Endothelial cell of umbilical vein (primary cell): ENCODE measurements at regions of chr17 and their contacts with region 1.

Region 1: DNA sequence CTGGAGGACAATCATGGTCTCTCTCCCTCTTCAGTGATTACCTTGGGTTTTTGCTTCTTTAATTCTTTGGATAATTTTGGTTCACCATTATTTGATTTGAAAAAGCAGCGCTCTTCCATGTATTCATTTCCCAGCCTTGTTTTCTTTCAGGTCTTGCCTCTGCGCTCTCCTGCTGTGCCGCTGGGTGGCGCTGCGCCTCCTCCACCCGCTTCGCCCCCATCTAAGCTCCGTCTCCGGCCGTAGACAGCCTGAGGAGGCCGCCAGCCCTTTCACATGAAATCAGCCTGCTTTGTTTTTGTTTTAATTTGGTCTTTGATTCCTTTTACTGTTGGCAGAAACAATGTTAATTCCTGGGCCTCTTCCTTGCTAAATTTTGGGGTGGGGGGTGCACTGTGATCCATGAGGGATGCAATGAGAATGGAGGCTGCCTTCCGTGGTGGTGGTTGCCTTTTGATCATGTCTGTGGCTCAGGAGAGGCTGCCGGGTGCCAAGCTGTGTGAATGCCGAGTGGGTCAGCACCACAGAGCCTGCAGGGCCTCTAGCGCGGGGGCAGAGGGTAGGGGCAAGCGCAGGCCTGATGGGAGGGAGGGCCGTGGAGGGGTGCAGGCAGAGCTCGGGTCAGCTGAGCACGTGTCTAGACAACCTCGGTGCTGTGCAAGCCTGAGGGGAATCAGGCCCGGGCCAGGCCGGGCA is 64.1 kb downstream of the PLD6 start:
- DNase-seq: peak; percentile 50
- H3K4me3 ChIP-seq: no peak overlapping the region
- H3K27ac ChIP-seq: no peak overlapping the region
- H3K4me1 ChIP-seq: peaks cover 12% of the 10 kb centered on the region
- H3K27me3 ChIP-seq: no peaks in the 10 kb centered on the region
- CTCF ChIP-seq: peak; percentile 88 to 94
- POLR2A ChIP-seq: no peak

Region 2: DNA sequence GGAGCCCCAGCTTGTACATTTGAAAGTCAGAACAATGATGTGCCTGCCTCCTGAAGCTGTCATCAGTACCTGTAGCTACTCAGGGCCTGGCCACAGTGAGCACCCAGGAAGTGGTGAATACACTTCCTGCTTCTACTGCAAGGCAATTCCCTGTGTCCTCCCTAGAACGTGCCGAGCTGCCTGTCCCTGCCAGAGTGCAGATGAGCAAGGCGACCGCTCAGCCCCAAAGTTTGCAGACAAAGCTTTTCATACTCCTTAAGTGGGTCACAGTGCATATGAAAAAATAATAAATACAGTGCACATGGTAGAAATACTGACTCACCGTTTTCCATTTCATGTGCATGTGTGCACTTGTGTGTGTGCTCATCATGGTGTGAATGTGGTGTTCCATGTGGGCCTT is 22.5 kb before region 1 on chr17:
- CTCF ChIA-PET with region 1: interaction called, 14 read pairs
- POLR2A ChIA-PET with region 1: no interaction called
- dilution Hi-C with region 1: no loop called
- intact Hi-C with region 1: no loop called
- DNase-seq: peak; percentile 29
- H3K4me3 ChIP-seq: no peak overlapping the region
- H3K27ac ChIP-seq: no peak overlapping the region
- H3K4me1 ChIP-seq: no peaks in the 10 kb centered on the region
- H3K27me3 ChIP-seq: no peaks in the 10 kb centered on the region
- CTCF ChIP-seq: no peak
- POLR2A ChIP-seq: no peak

Region 3: GRCh38 chr17:17171991-17172939 is 30.3 kb after region 1 on chr17:
- CTCF ChIA-PET with region 1: interaction called, 13 read pairs
- POLR2A ChIA-PET with region 1: no interaction called
- dilution Hi-C with region 1: no loop called
- intact Hi-C with region 1: no loop called
- DNase-seq: peak; percentile 25
- H3K4me3 ChIP-seq: no peak overlapping the region
- H3K27ac ChIP-seq: no peak overlapping the region
- H3K4me1 ChIP-seq: peaks cover 12% of the 10 kb centered on the region
- H3K27me3 ChIP-seq: no peaks in the 10 kb centered on the region
- CTCF ChIP-seq: peak in 1 of 2 donors; percentile 6
- POLR2A ChIP-seq: no peak

Region 4: GRCh38 chr17:17206124-17206912 is 64.3 kb after region 1 on chr17 and contains the start of gene PLD6:
- CTCF ChIA-PET with region 1: interaction called, 8 read pairs
- POLR2A ChIA-PET with region 1: no interaction called
- dilution Hi-C with region 1: no loop called
- intact Hi-C with region 1: loop called (anchors 1 kb)
- DNase-seq: peak; percentile 68
- H3K4me3 ChIP-seq: peak within 1 kb of the TSS; percentile 36 to 53 (median 48)
- H3K27ac ChIP-seq: no peak within 1 kb of the TSS
- H3K4me1 ChIP-seq: peaks cover 13% of the 10 kb centered on the region
- H3K27me3 ChIP-seq: no peaks in the 10 kb centered on the region
- CTCF ChIP-seq: no peak
- POLR2A ChIP-seq: peak; percentile 45
- total RNA-seq, gene PLD6: 2.7 and 4.4 TPM in 2 replicates

Region 5: GRCh38 chr17:17313350-17313991 is 171.5 kb after region 1 on chr17:
- CTCF ChIA-PET with region 1: no interaction called
- POLR2A ChIA-PET with region 1: no interaction called
- dilution Hi-C with region 1: no loop called
- intact Hi-C with region 1: loop called (anchors 1 kb)
- DNase-seq: peak; percentile 16
- H3K4me3 ChIP-seq: no peak overlapping the region
- H3K27ac ChIP-seq: no peak overlapping the region
- H3K4me1 ChIP-seq: peaks cover 4% of the 10 kb centered on the region
- H3K27me3 ChIP-seq: no peaks in the 10 kb centered on the region
- CTCF ChIP-seq: peak; percentile 19 to 21
- POLR2A ChIP-seq: no peak